Psoas muscle (tissue), 8 donors: ENCODE measurements at regions of chr7 and their contacts with region 1.

Region 1: GRCh38 chr7:105149827-105150226 is 135.8 kb downstream of the KMT2E start:
- DNase-seq: no peak
- ATAC-seq: peak in 2 of 4 donors; percentile 32 to 35
- H3K4me3 ChIP-seq: no peak overlapping the region
- H3K27ac ChIP-seq: no peak overlapping the region
- H3K4me1 ChIP-seq: peaks cover 12% of the 10 kb centered on the region
- H3K27me3 ChIP-seq: no peaks in the 10 kb centered on the region
- CTCF ChIP-seq: no peak

Region 2: DNA sequence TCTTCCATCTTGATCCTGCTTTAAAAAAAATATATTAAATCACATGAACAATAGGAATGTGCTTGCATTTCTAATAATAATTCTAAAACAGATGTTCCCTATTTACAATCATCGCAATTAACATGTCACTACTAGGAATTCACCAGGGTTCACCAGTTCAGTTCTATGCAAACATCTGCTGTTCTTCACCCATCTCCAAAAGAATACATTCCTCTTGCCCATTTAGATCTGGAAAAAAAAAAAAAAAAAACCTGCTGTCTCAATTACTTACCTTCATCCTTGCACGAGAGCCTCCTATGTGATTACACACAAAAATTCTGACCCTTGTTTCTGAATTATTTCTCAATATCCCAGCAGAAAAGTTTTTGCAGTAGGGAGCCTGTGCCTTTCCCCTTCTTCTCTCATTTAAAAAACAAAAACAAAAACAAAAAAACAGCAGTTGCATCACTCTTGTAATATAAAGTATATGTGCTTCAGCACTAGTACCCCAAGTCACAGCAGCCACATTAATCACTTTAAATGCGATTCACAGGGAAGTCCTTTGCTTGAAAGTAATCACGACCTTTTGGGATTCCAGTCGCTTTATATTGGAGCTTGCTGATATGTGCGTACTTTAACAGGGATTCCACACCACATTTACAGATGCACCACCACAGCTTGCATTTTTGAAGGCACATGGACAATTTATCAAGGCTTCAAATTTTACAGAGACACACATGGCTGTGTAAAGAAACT is 330.5 kb before region 1 on chr7:
- intact Hi-C with region 1: no loop called
- DNase-seq: no peak
- ATAC-seq: no peak
- H3K4me3 ChIP-seq: no peak overlapping the region
- H3K27ac ChIP-seq: no peak overlapping the region
- H3K4me1 ChIP-seq: no peaks in the 10 kb centered on the region
- H3K27me3 ChIP-seq: no peaks in the 10 kb centered on the region
- CTCF ChIP-seq: no peak

Region 3: GRCh38 chr7:105036217-105037168 is 113.3 kb before region 1 on chr7:
- intact Hi-C with region 1: no loop called
- DNase-seq: no peak
- ATAC-seq: peak; percentile 32 to 64 (median 56)
- H3K4me3 ChIP-seq: no peak overlapping the region
- H3K27ac ChIP-seq: peak overlapping the region; percentile 25
- H3K4me1 ChIP-seq: peaks cover 67% of the 10 kb centered on the region
- H3K27me3 ChIP-seq: no peaks in the 10 kb centered on the region
- CTCF ChIP-seq: no peak

Region 4: DNA sequence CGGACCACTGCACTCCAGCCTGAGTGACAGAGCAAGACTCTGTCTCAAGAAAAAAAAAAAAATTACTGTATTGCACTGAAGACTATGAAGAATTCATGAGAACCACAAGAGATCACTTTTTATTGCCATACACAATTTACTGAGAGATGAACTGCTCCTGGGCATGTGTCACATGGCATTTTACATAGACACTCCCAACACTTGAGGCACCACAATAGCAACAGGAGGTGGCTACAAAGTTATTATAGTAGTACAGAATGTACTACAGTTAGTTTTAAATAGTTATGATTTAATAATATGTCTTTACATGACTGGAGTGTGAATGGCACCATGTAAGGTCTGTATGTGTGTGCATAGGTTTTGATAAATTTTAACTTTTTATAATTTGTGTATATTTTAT is 65.2 kb before region 1 on chr7:
- intact Hi-C with region 1: no loop called
- DNase-seq: no peak
- ATAC-seq: peak in 2 of 4 donors; percentile 83 to 86
- H3K4me3 ChIP-seq: no peak overlapping the region
- H3K27ac ChIP-seq: no peak overlapping the region
- H3K4me1 ChIP-seq: peaks cover 3% of the 10 kb centered on the region
- H3K27me3 ChIP-seq: no peaks in the 10 kb centered on the region
- CTCF ChIP-seq: no peak

Region 5: DNA sequence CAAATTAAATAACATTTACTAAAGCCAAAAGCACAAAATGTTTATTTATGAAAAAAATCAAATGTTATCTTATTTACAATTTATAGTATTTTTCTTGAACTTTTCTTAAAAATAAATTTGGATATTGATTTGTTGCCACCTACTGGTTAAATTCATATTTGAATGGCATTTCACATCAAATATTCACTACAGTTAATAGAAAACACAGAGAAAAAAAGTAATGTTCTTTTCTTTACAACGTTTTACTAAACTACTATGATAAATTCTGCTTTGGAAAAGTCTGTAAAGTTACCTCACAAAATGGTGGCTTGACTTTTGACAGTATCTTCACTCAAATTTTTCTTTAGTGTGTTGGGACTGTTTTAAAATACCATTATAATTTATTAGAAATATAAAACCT is 186.2 kb after region 1 on chr7:
- intact Hi-C with region 1: loop called in 1 of 2 experiments (anchors 10 kb)
- DNase-seq: no peak
- ATAC-seq: no peak
- H3K4me3 ChIP-seq: no peak overlapping the region
- H3K27ac ChIP-seq: no peak overlapping the region
- H3K4me1 ChIP-seq: peaks cover 22% of the 10 kb centered on the region
- H3K27me3 ChIP-seq: no peaks in the 10 kb centered on the region
- CTCF ChIP-seq: peak; percentile 50

Region 6: GRCh38 chr7:105429746-105430612 is 280.2 kb after region 1 on chr7:
- intact Hi-C with region 1: loop called in 1 of 2 experiments (anchors 10 kb)
- DNase-seq: no peak
- ATAC-seq: peak in 1 of 4 donors; percentile 56
- H3K4me3 ChIP-seq: no peak overlapping the region
- H3K27ac ChIP-seq: no peak overlapping the region
- H3K4me1 ChIP-seq: no peaks in the 10 kb centered on the region
- H3K27me3 ChIP-seq: no peaks in the 10 kb centered on the region
- CTCF ChIP-seq: peak; percentile 54